Activated CD4-positive, alpha-beta memory T cell treated with anti-CD3 and anti-CD28 coated beads, Interleukin-2, amount 10 ng/mL, durations not matched to agents 7 days and 5 days (primary cell): ENCODE measurements at regions of chr9 and their contacts with region 1.

Region 1: GRCh38 chr9:114653556-114654159 is 3.9 kb downstream of the TEX53 start:
- DNase-seq: peak; percentile 85
- H3K4me3 Mint-ChIP-seq: no peak overlapping the region
- H3K27ac Mint-ChIP-seq: peak overlapping the region; percentile 36
- H3K4me1 Mint-ChIP-seq: peaks cover 21% of the 10 kb centered on the region
- H3K27me3 Mint-ChIP-seq: no peaks in the 10 kb centered on the region

Region 2: GRCh38 chr9:114413861-114414301 is 239.8 kb before region 1 on chr9:
- CTCF ChIA-PET with region 1: interaction called, 314 read pairs
- POLR2A ChIA-PET with region 1: no interaction called
- DNase-seq: no peak
- H3K4me3 Mint-ChIP-seq: no peak overlapping the region
- H3K27ac Mint-ChIP-seq: no peak overlapping the region
- H3K4me1 Mint-ChIP-seq: peaks cover 30% of the 10 kb centered on the region
- H3K27me3 Mint-ChIP-seq: no peaks in the 10 kb centered on the region

Region 3: DNA sequence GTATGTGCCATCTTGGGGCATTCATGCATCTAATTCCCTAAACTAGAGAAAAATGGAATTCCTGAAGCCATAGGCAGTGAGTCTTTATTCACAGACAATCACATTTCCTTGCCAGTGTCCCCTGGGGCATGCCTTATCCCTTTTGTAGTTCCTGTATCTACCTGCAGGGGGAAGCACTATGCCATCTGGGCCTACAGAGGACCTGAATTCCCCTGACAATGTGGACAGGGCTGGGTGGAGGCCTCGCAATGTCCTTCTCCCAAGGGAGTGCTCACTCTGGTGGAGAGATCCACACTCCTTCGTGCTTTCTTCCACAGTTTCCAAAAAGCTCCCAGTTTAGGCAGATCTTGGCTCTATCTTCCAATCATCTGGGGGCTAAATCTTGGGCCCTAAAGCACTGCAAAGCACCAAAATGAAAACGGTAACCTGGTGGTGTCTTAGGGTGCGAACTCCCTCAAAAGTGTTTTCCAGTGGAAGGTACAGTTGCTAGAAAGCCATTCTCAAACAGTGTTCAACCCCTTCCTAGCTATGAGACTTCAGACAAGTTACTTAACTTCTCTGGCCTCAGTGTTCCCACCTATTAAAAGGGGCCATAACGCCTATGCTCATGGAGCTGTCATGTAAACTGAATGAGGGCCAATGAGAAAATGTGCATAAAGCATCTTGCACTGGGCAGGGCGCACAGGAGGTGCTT is 165.9 kb before region 1 on chr9:
- CTCF ChIA-PET with region 1: interaction called, 88 read pairs
- POLR2A ChIA-PET with region 1: interaction called, 4 read pairs
- DNase-seq: peak; percentile 63
- H3K4me3 Mint-ChIP-seq: no peak overlapping the region
- H3K27ac Mint-ChIP-seq: no peak overlapping the region
- H3K4me1 Mint-ChIP-seq: peaks cover 34% of the 10 kb centered on the region
- H3K27me3 Mint-ChIP-seq: peaks cover 12% of the 10 kb centered on the region

Region 4: GRCh38 chr9:114538241-114538640 is 115.4 kb before region 1 on chr9:
- CTCF ChIA-PET with region 1: interaction called, 32 read pairs
- POLR2A ChIA-PET with region 1: no interaction called
- DNase-seq: peak; percentile 26
- H3K4me3 Mint-ChIP-seq: no peak overlapping the region
- H3K27ac Mint-ChIP-seq: no peak overlapping the region
- H3K4me1 Mint-ChIP-seq: no peaks in the 10 kb centered on the region
- H3K27me3 Mint-ChIP-seq: peaks cover 24% of the 10 kb centered on the region

Region 5: DNA sequence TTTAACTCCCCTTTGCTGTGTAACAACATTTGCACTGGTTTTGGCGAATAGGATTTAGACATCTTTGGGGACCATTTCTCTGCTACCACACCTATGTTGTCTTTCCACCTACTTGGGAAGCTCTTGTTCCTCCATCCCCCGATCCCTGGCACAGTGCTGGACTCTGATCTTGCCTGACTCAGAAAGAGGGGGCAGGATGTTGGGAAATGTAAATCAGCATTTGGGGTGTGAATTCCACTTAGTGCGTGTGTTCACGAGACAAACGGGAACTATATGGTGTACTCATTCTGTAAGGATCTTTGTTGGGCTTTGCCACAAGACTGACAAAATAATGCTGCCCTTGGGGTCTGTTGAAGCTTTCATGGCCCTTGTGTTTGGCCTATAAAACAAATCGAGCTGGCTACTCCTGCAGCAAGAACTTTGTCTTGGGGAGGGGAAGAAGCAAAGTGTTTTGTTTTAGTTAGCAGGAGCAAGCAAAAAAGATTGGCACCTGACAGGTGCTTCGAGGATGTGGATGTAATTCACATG is 24.0 kb before region 1 on chr9:
- CTCF ChIA-PET with region 1: interaction called, 11 read pairs
- POLR2A ChIA-PET with region 1: no interaction called
- DNase-seq: no peak
- H3K4me3 Mint-ChIP-seq: no peak overlapping the region
- H3K27ac Mint-ChIP-seq: no peak overlapping the region
- H3K4me1 Mint-ChIP-seq: no peaks in the 10 kb centered on the region
- H3K27me3 Mint-ChIP-seq: no peaks in the 10 kb centered on the region

Region 6: GRCh38 chr9:114718801-114719221 is 65.2 kb after region 1 on chr9:
- CTCF ChIA-PET with region 1: no interaction called
- POLR2A ChIA-PET with region 1: no interaction called
- DNase-seq: peak; percentile 98
- H3K4me3 Mint-ChIP-seq: peak overlapping the region; percentile 3
- H3K27ac Mint-ChIP-seq: peak overlapping the region; percentile 93
- H3K4me1 Mint-ChIP-seq: peaks cover 68% of the 10 kb centered on the region
- H3K27me3 Mint-ChIP-seq: peaks cover 20% of the 10 kb centered on the region